Activated B cell treated with CpG ODN at 0.5 μM for 24 hours (primary cell): ENCODE measurements at regions of chr4 and their contacts with region 1.

Region 1: GRCh38 chr4:39469429-39470077 is 10.7 kb downstream of the LIAS start:
- DNase-seq: no peak
- ATAC-seq: peak; percentile 99
- H3K4me3 Mint-ChIP-seq: peak overlapping the region; percentile 59
- H3K27ac Mint-ChIP-seq: peak overlapping the region; percentile 88
- H3K4me1 Mint-ChIP-seq: peaks cover 8% of the 10 kb centered on the region
- H3K27me3 Mint-ChIP-seq: no peaks in the 10 kb centered on the region
- CTCF ChIP-seq: peak; percentile 74

Region 2: GRCh38 chr4:39458505-39459300 is 10.8 kb before region 1 on chr4 and contains the starts of genes LIAS and RPL9:
- CTCF ChIA-PET with region 1: interaction called, 8 read pairs
- POLR2A ChIA-PET with region 1: interaction called, 23 read pairs
- intact Hi-C with region 1: no loop called
- DNase-seq: peak; percentile 90
- ATAC-seq: peak; percentile 81
- H3K4me3 Mint-ChIP-seq: peak within 1 kb of the TSS; percentile 97
- H3K27ac Mint-ChIP-seq: peak within 1 kb of the TSS; percentile 98
- H3K4me1 Mint-ChIP-seq: peaks cover 36% of the 10 kb centered on the region
- H3K27me3 Mint-ChIP-seq: no peaks in the 10 kb centered on the region
- CTCF ChIP-seq: no peak
- total RNA-seq, gene LIAS: 19.5 and 20.5 TPM in 2 replicates
- total RNA-seq, gene RPL9: 2,632 and 2,865 TPM in 2 replicates

Region 3: GRCh38 chr4:39559626-39560025 is 90.1 kb after region 1 on chr4:
- CTCF ChIA-PET with region 1: no interaction called
- POLR2A ChIA-PET with region 1: interaction called, 12 read pairs
- intact Hi-C with region 1: no loop called
- DNase-seq: no peak
- ATAC-seq: no peak
- H3K4me3 Mint-ChIP-seq: no peak overlapping the region
- H3K27ac Mint-ChIP-seq: peak overlapping the region; percentile 5
- H3K4me1 Mint-ChIP-seq: peaks cover 7% of the 10 kb centered on the region
- H3K27me3 Mint-ChIP-seq: no peaks in the 10 kb centered on the region
- CTCF ChIP-seq: no peak

Region 4: GRCh38 chr4:39657465-39657864 is 187.9 kb after region 1 on chr4:
- CTCF ChIA-PET with region 1: interaction called, 20 read pairs
- POLR2A ChIA-PET with region 1: interaction called, 4 read pairs
- intact Hi-C with region 1: loop called (anchors 1 kb)
- DNase-seq: no peak
- ATAC-seq: peak; percentile 91
- H3K4me3 Mint-ChIP-seq: peak overlapping the region; percentile 71
- H3K27ac Mint-ChIP-seq: peak overlapping the region; percentile 81
- H3K4me1 Mint-ChIP-seq: peaks cover 35% of the 10 kb centered on the region
- H3K27me3 Mint-ChIP-seq: no peaks in the 10 kb centered on the region
- CTCF ChIP-seq: no peak

Region 5: DNA sequence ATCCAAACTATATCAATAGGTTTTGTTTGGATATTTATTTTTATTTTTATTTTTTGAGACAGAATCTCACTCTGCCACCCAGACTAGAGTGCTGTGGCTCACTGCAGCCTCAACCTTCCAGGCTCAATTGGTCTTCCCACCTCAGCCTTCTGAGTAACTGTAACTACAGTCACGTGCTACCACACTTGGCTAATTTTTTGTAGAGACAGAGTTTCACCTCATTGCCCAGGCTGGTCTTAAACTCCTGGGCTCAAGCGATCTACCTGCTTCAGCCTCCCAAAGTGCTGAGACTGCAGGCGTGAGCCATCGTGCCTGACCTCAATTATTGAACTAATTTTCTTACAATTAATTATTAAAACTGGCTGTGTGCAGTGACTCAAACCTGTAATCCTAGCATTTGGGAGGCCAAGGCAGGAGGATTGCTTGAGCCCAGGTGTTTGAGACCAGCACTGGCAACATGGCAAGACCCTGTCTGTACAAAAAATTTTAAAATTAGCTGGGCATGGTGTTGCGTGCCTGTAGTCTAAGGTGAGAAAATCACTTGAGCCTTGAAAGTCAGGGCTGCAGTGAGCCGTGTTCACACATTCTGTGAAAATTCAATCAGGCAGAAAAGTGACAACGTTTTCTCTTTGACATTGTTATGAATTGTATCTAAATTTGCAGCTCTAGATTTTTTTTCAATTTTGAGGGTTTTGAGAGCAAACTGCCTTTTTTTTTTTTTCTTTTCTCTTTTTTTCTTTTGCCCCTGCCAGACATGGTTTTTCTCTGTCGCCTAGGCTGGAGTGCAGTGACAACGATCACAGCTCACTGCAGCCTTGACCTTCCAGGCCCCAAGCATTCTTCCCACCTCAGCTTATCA is 294.4 kb after region 1 on chr4:
- CTCF ChIA-PET with region 1: interaction called, 3 read pairs
- POLR2A ChIA-PET with region 1: no interaction called
- intact Hi-C with region 1: loop called (anchors 5 kb)
- DNase-seq: no peak
- ATAC-seq: no peak
- H3K4me3 Mint-ChIP-seq: no peak overlapping the region
- H3K27ac Mint-ChIP-seq: peak overlapping the region; percentile 69
- H3K4me1 Mint-ChIP-seq: peaks cover 14% of the 10 kb centered on the region
- H3K27me3 Mint-ChIP-seq: no peaks in the 10 kb centered on the region
- CTCF ChIP-seq: no peak

Region 6: GRCh38 chr4:39873823-39874222 is 404.3 kb after region 1 on chr4:
- CTCF ChIA-PET with region 1: no interaction called
- POLR2A ChIA-PET with region 1: no interaction called
- intact Hi-C with region 1: loop called (anchors 10 kb)
- DNase-seq: no peak
- ATAC-seq: no peak
- H3K4me3 Mint-ChIP-seq: no peak overlapping the region
- H3K27ac Mint-ChIP-seq: peak overlapping the region; percentile 21
- H3K4me1 Mint-ChIP-seq: no peaks in the 10 kb centered on the region
- H3K27me3 Mint-ChIP-seq: no peaks in the 10 kb centered on the region
- CTCF ChIP-seq: no peak

Region 7: DNA sequence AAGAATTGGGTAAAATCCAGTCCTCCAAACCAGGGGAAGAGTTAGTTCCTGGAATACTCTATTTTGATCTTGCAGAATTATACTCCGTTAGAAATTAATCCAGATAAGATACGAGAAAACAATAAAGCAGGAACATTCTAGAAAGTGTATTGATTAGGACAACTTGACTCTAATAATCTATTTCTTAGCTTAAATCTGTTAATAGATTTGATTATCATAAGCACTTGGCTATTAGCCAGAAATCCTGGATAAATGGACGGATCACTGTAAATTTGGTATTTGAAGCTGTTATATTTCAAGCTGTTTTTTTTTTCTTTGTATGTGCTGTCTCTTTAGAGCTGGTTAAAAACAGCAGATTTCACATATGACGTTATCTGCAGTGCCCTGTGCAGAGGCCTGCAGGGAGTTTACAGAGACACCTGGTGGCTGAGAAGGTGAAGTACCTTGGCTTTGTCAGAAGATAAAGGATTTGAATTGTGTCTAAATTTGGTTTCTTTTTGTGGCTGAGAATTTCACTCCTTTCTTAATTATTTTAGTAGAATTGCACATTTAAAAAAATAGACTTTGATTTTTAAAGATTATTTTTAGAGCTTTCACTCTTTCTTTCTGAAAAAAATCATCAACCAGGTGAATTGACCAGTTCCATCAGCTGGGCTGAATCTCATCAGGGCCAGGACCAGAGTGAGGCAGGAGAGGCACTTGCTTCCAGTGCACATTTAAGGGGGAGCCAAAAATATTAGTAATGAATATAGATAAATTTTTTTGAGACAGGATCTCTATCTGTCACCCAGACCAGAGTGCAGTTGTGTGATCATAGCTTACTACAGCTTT is 855.9 kb after region 1 on chr4:
- CTCF ChIA-PET with region 1: no interaction called
- POLR2A ChIA-PET with region 1: no interaction called
- intact Hi-C with region 1: loop called (anchors 2 kb)
- DNase-seq: no peak
- ATAC-seq: peak; percentile 100
- H3K4me3 Mint-ChIP-seq: no peak overlapping the region
- H3K27ac Mint-ChIP-seq: no peak overlapping the region
- H3K4me1 Mint-ChIP-seq: peaks cover 14% of the 10 kb centered on the region
- H3K27me3 Mint-ChIP-seq: peaks cover 5% of the 10 kb centered on the region
- CTCF ChIP-seq: no peak